ENCODE measurements at regions of chr6 and their contacts with region 1.

Region 1: DNA sequence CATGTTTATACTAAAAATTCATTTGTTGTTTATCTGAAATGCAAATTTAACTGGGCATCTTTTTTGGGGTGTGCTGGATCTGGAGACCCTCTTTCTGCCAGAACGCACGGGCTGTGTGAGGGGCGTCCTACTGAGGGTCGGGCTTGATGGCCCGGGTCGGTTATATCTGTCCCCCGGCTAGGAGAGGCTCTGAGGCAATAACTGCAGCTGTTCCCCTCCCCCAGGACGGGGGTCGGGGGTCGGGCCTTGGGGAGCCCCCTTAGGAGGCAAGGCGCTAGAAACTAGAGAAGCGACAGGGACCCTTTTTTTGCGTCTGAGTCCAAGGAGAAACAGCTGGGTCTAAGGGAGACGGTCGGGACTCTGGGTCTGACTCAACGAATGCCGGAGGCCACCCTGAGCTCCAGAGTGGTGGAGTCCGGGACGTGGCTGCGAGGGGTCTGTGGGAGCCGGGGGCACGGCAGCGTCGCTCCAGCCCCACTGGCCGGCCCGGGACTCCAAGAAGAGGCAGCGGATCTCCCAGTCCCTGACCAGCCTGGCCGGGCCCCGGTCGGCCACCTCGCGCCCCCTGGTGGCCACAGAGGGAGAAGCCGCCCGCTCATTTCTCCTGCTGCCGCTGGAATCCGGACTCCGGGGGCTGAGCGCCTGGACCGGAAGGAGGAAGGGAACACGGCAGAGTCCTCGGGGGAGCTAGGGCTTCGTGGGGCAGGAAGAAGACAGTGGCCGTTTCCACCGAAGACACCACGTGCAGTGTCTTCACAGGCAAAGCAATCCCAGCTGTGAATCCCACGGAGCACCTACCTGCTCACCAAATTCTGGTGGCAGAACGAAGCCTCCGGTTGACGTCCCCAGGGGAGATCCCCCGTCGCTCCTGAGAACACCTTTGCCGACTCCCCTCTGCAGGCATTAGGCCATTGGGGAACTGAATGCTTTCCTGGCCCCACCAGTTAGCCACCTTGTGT is 24.0 kb upstream of the SCML4 start:
- DNase-seq: peak; percentile 85
- H3K4me3 Mint-ChIP-seq: peak overlapping the region; percentile 71
- H3K27ac Mint-ChIP-seq: peak overlapping the region; percentile 64
- H3K4me1 Mint-ChIP-seq: peaks cover 35% of the 10 kb centered on the region
- H3K27me3 Mint-ChIP-seq: peaks cover 37% of the 10 kb centered on the region

Region 2: GRCh38 chr6:107674995-107675738 is 173.0 kb before region 1 on chr6:
- CTCF ChIA-PET with region 1: interaction called, 37 read pairs
- DNase-seq: peak; percentile 93
- H3K4me3 Mint-ChIP-seq: peak overlapping the region; percentile 46
- H3K27ac Mint-ChIP-seq: peak overlapping the region; percentile 54
- H3K4me1 Mint-ChIP-seq: peaks cover 21% of the 10 kb centered on the region
- H3K27me3 Mint-ChIP-seq: peaks cover 17% of the 10 kb centered on the region

Region 3: DNA sequence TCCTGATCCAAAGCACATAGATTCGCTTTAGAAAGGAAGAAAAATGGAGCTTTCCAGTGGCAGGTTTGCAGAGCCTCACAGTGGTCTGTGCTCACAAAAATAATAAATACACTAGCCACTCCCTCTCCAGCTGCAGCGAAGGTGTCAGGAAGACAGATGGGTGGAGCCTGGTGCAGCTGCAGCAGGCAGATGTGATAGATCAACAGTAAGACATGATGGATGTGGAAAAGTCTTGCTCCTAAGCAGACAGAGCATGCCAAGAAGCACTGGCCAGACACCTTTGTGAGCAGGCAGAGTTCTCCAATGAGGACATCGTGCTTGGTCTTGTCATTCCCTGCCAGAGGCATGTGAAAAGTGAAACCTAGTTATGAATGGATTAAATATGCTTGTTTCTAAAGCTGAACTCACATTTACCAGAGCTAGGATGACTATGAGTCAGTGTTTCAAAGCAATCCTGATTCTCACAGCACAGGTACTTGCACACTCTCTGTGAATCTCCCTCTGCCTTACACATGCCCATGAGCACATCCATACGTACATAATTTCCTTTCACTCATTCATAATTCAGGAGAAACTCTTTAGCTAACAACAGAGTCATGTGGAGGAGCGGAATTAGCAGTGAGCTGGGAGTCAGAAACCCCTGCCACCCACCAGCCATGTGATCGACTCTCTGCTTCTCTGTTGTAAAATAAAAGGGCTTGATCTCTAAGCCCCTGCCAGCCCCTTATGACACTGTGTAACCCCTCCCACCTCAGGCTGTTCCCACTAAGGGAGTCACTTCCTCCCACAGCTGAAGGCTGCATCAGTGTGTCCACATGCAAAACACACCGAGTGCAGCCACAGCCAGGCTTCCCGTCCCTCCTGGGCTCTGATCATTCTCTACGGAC is 135.2 kb before region 1 on chr6:
- CTCF ChIA-PET with region 1: interaction called, 11 read pairs
- DNase-seq: peak; percentile 46
- H3K4me3 Mint-ChIP-seq: peak overlapping the region; percentile 48
- H3K27ac Mint-ChIP-seq: peak overlapping the region; percentile 86
- H3K4me1 Mint-ChIP-seq: peaks cover 69% of the 10 kb centered on the region
- H3K27me3 Mint-ChIP-seq: no peaks in the 10 kb centered on the region

Region 4: DNA sequence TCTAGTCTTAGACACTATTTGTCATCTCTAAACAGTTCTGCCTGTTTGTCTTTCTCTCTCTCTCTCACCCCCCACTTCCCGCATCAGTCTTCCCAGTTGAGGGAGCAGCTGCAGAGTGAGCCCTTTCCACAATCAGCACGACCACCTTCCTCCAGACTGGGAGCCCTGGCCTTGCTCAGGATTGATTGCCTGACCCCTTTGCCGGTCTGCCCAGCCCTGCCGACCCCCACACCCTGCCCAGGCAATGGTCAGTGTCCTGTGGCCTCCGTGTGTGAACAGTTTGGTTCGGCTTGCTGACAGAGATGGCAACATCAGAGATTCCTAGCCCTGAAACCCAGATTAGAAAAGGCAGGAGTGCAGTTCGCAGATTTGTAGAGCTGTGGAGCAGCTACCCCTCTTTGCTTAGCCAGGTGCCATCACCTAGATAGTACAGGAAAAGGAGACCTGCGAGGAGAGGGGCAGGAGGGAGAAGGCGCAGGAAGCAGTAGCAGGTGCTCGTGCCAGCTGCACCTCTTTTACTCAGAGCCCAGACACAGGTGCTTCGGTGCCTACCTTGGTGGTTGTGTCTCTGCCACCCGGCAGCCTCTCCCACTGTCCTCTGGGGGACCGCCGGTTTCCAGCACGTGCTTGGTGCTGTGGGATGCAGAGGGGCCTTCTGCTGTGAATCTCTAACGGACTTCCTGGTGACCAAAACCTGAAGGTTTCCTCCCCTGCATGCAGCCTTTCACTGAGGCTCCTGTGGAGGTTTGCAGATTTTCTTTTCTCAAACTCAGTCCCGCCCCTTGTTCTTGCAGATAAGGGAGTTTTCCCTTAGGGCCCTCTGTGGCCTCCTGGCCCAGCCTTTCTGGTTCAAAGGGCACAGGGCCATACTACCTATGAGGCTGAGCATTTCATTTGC is 116.5 kb before region 1 on chr6:
- CTCF ChIA-PET with region 1: interaction called, 72 read pairs
- DNase-seq: peak; percentile 57
- H3K4me3 Mint-ChIP-seq: peak overlapping the region; percentile 87
- H3K27ac Mint-ChIP-seq: peak overlapping the region; percentile 87
- H3K4me1 Mint-ChIP-seq: peaks cover 89% of the 10 kb centered on the region
- H3K27me3 Mint-ChIP-seq: no peaks in the 10 kb centered on the region

Region 5: GRCh38 chr6:107786709-107787588 is 61.2 kb before region 1 on chr6:
- CTCF ChIA-PET with region 1: interaction called, 23 read pairs
- DNase-seq: peak; percentile 77
- H3K4me3 Mint-ChIP-seq: peak overlapping the region; percentile 67
- H3K27ac Mint-ChIP-seq: peak overlapping the region; percentile 95
- H3K4me1 Mint-ChIP-seq: peaks cover 77% of the 10 kb centered on the region
- H3K27me3 Mint-ChIP-seq: no peaks in the 10 kb centered on the region

Region 6: GRCh38 chr6:107811591-107812218 is 36.4 kb before region 1 on chr6:
- CTCF ChIA-PET with region 1: interaction called, 17 read pairs
- DNase-seq: no peak
- H3K4me3 Mint-ChIP-seq: no peak overlapping the region
- H3K27ac Mint-ChIP-seq: peak overlapping the region; percentile 20
- H3K4me1 Mint-ChIP-seq: peaks cover 14% of the 10 kb centered on the region
- H3K27me3 Mint-ChIP-seq: no peaks in the 10 kb centered on the region

Region 7: GRCh38 chr6:107832151-107833056 is 15.7 kb before region 1 on chr6:
- CTCF ChIA-PET with region 1: interaction called, 21 read pairs
- DNase-seq: no peak
- H3K4me3 Mint-ChIP-seq: no peak overlapping the region
- H3K27ac Mint-ChIP-seq: peak overlapping the region; percentile 43
- H3K4me1 Mint-ChIP-seq: peaks cover 27% of the 10 kb centered on the region
- H3K27me3 Mint-ChIP-seq: peaks cover 3% of the 10 kb centered on the region

Region 8: DNA sequence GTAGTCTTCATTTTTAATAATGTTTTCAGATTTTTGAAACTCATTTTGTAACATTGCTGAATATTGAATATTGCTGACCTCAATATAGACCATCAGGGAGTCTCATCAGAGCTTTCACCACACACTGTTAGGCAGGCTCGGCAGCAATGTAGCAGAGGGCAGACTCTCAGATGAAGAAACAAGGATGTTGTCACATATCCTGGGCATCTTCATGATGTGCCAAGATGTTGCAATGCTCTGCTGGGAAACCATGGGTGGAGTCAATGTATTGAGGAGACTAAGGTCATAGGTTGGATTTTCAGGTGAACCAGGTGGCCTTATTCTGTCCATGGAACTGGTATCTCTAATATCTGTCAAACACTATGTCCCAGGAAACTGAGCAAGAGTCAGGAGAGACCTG is 345.0 kb after region 1 on chr6:
- CTCF ChIA-PET with region 1: no interaction called
- DNase-seq: no peak
- H3K4me3 Mint-ChIP-seq: no peak overlapping the region
- H3K27ac Mint-ChIP-seq: no peak overlapping the region
- H3K4me1 Mint-ChIP-seq: no peaks in the 10 kb centered on the region
- H3K27me3 Mint-ChIP-seq: peaks cover 61% of the 10 kb centered on the region